Heart left ventricle (tissue), 16 donors: ENCODE measurements at regions of chr7 and their contacts with region 1.

Region 1: DNA sequence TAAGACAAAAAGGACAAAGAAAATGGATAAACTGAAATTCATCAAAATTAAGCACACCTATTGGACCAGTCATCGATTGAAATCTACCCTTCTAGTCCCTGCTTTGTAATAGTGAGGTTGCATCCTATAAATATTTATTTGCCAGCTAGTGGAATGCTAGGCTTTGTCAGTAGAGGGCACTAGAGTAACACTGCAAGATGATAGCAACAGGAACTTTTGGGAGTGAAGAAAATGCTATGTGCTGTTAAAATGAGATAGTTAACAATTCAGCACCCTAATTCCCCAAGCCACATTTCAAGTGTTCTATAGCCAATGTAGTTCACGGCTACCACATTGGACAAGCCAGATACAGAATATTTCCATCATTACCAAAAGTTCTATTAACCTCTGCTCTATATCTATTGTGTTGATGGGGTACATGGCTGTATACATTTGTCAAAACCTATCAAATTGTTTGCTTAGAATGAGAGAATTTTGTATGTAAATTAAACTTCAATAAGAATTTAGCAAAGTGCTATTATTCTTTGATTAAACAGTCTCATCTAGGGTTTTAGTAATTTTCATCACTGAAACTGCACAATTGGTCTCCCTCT is 69.8 kb downstream of the LSMEM1 start:
- DNase-seq: no peak
- ATAC-seq: peak; percentile 37 to 77 (median 56)
- H3K4me3 ChIP-seq: no peak overlapping the region
- H3K27ac ChIP-seq: no peak overlapping the region
- H3K4me1 ChIP-seq: no peaks in the 10 kb centered on the region
- H3K27me3 ChIP-seq: no peaks in the 10 kb centered on the region
- CTCF ChIP-seq: peak; percentile 76 to 96 (median 90)
- POLR2A ChIP-seq: no peak

Region 2: DNA sequence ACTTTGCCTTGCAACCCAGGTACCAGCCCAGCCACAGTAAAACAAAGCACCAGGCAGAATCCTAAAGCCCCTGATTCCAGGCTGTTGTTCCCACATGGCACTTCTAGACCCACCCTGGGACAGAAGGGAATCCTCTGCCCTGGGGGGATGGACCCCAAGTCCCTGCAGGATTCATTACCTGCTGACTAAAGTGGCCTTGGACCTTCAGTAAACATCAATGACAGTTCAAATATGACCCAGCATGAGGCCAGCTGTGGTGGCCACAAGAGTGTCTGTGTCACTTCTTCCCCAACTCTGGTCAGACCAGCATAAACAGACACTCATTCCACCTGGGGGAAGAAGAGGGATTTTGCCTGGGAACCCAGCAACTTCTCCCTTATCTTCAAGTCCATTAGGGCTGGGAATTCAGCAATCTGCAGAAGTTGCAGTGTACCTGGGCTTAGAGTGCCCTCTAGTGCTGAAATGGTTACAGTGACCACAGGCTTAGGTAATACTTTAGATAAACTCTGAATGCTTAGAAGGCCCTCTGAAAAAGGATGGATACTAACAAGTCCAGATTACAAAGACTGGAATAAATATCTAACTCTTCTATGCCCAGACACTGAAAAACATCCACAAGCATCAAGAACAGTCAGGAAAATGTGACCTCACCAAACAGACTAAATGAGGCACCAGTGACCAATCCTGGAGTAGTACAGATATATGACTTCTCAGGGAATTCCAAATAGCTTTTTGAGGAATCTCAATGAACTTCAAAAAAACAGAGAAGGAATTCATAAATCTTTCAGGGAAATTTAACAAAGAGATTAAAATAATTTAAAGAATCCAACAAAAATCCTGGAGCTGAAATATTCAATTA is 348.1 kb after region 1 on chr7:
- intact Hi-C with region 1: loop called in 9 of 10 experiments (anchors 2 to 10 kb)
- DNase-seq: peak in 1 of 5 donors; percentile 40
- ATAC-seq: peak; percentile 41 to 86 (median 76)
- H3K4me3 ChIP-seq: no peak overlapping the region
- H3K27ac ChIP-seq: no peak overlapping the region
- H3K4me1 ChIP-seq: peaks cover 0 to 32% (median 9%) of the 10 kb centered on the region in 12 donors
- H3K27me3 ChIP-seq: no peaks in the 10 kb centered on the region
- CTCF ChIP-seq: peak; percentile 55 to 80 (median 65)
- POLR2A ChIP-seq: no peak

Region 3: DNA sequence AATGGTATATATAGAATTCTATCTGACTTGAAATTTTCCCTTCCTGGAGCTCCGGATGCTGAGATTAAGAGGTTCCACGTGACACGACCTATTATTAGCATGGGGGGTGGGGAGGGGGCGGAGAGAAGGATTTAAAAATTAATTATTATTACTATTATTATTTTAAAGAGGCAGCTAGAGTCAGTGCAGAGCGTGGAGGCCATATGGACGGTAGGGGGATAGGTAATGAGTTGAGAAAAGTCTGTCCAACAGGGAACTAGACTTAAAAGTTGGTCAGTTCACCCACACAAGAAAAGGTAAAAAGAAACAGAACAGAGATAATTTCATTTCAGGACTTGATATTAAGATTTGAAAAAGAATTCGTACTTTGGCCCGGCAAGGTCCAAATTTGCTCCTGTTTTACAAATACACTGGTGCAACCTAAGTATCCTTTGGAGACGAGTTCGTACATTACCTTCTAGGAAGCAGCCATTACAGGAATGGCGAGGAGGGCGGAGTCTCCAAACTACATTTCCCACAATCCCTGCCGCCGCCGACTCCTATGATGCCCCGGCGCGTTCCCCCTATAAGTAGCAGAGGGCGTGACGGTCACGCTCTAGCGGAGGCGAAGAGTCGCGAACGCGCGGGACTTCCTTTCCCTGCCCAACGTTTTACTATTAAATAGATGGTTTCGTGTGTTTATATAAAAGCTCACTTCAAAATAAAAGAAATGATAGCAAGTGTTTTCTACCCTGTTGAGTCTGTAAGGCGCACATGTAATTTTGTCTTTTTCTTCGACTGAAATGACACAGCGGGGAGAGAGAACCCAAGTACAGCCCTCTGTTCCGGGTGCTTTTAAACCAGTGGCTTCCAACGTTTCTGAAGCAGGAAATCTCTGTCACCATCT is 567.8 kb after region 1 on chr7 and contains the start of gene SMIM30:
- intact Hi-C with region 1: loop called in 1 of 10 experiments (anchors 10 kb)
- DNase-seq: peak; percentile 94 to 96 (median 95)
- ATAC-seq: peak; percentile 100
- H3K4me3 ChIP-seq: peak within 1 kb of the TSS; percentile 33 to 79 (median 66)
- H3K27ac ChIP-seq: peak within 1 kb of the TSS; percentile 69 to 91 (median 80)
- H3K4me1 ChIP-seq: peaks cover 0 to 30% (median 9%) of the 10 kb centered on the region in 12 donors
- H3K27me3 ChIP-seq: no peaks in the 10 kb centered on the region
- CTCF ChIP-seq: no peak
- POLR2A ChIP-seq: peak; percentile 50 to 96
- total RNA-seq, gene SMIM30: 72.4 to 180 (median 137) TPM

Region 4: DNA sequence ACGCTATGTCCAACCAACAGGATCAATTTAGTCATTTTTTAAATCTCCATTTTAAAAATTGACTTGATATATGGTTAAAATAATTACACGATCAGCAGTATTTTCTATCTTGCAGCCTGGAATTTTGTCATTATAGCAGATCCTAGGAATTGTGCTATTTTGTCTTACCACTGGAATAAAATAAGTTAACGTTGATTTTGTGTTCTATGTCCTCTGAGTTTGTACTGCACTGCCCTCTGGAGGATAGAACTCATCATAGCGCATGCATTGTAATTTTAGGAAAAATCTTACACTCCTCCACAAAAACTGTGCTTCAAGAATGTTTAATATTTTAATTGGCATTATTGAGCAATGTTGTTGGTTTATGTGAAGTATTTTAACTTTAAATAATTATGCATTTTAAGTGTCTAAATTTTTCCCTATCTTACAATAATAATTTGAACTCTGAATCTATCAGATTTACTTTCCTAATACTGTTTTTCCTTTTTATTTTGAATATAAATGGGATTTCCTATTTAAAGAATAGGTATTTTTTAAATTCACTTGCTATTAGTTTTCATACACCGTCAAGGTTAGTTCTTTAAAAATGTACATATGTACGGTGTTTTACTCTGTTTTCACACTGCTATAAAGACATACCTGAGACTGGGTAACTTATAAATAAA is 1148.1 kb after region 1 on chr7:
- intact Hi-C with region 1: loop called in 2 of 10 experiments (anchors 10 kb)
- DNase-seq: no peak
- ATAC-seq: no peak
- H3K4me3 ChIP-seq: no peak overlapping the region
- H3K27ac ChIP-seq: no peak overlapping the region
- H3K4me1 ChIP-seq: no peaks in the 10 kb centered on the region
- H3K27me3 ChIP-seq: no peaks in the 10 kb centered on the region
- CTCF ChIP-seq: peak; percentile 45 to 71 (median 62)
- POLR2A ChIP-seq: no peak